ENCODE measurements at regions of chr20 and their contacts with region 1.

Region 1: DNA sequence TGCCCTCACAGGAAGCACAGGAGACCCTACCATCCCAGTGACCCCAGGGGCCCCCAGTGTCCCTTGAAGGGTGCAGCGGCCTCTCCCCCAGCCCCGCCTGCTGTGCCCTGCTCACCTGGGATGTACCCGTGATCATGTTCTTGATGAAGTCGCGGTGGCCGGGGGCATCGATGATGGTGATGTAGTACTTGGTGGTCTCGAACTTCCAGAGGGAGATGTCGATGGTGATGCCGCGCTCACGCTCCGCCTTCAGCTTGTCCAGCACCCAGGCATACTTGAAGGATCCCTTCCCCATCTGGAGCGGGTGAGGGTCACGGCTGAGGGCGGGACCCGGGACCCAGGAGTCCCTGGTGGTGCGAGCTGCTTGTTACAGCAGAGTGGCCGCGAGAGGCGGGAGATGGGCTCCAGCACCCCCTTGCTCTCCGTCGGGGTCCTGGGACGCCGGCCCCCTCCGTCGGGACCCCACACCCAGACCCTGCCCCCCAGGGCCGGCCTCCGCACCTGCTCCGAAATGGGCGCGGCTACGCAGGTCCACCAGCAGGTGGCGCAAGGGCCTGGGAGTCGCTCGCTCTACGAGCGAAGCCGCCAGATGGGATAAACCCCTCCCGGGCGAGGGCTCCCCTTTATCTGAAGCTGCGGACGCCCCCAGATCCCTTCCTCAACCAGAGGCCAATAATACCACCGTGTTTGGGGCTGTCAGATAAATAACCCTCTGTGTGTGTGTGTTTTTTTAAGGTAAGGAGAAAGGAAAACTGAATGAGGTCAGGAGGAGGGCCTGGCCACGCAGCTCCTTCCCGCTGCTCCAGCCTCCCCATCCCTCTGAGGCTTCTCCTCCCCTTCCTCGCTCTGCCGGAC is 2.9 kb downstream of the EEF1A2 start:
- DNase-seq: peak; percentile 87
- ATAC-seq: peak; percentile 61
- H3K4me3 Mint-ChIP-seq: peak overlapping the region; percentile 52
- H3K27ac Mint-ChIP-seq: no peak overlapping the region
- H3K4me1 Mint-ChIP-seq: peaks cover 7% of the 10 kb centered on the region
- H3K27me3 Mint-ChIP-seq: peaks cover 38% of the 10 kb centered on the region
- CTCF ChIP-seq: peak; percentile 97

Region 2: DNA sequence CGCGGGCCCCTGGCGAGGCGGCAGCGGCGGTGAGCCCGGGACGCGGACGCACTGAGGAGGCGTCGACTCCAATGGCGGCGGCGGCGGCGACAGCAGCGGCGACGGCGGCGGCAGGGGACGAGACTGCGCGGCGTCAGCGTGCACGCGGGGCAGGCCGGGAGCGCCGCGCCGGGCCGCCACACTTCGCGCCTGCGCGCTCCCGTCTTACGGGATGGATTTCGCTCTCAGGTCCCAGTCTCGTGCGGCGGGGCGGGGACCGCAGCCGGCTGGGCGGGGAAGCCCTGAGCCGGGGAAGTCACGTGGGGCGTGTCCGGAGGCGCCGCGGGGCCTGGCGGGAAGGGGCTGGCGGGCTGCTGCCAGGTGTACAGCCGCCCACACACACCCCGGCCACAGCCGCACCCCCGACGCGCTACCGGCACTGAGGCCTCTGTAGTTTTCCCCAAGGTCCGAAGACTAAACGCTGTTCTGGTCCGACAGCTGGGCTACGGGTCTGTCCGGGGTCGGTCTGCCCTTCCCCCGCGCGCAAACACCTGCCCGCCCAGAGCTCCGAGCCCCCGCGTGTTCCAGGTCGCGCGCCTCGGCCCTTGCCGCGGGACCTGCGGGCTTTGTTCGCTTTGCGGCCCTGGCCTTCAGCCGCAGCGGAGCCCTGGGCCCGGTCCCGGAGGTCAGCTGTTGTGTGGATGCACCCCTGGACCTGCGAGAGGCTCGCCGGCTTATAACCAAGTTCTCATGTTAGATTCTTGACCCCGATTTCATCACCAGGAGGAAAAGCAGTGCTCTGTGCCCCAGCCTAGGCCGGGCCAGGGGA is 279.7 kb before region 1 on chr20 and contains the start of gene YTHDF1:
- CTCF ChIA-PET with region 1: no interaction called
- POLR2A ChIA-PET with region 1: no interaction called
- DNase-seq: peak; percentile 93
- ATAC-seq: peak; percentile 85
- H3K4me3 Mint-ChIP-seq: peak within 1 kb of the TSS; percentile 96
- H3K27ac Mint-ChIP-seq: peak within 1 kb of the TSS; percentile 93
- H3K4me1 Mint-ChIP-seq: peaks cover 28% of the 10 kb centered on the region
- H3K27me3 Mint-ChIP-seq: peaks cover 4% of the 10 kb centered on the region; the same call in 1 of the 2 replicates
- CTCF ChIP-seq: no peak
- total RNA-seq, gene YTHDF1: 50.2 to 61.3 TPM (median 51.3 TPM) in 3 replicates

Region 3: GRCh38 chr20:63261060-63261794 is 234.7 kb before region 1 on chr20:
- CTCF ChIA-PET with region 1: no interaction called
- POLR2A ChIA-PET with region 1: no interaction called
- DNase-seq: no peak
- ATAC-seq: no peak; the same call in 1 of the 2 replicates
- H3K4me3 Mint-ChIP-seq: no peak overlapping the region
- H3K27ac Mint-ChIP-seq: no peak overlapping the region
- H3K4me1 Mint-ChIP-seq: peaks cover 10% of the 10 kb centered on the region
- H3K27me3 Mint-ChIP-seq: peaks cover 10% of the 10 kb centered on the region
- CTCF ChIP-seq: no peak

Region 4: GRCh38 chr20:63463400-63464288 is 32.3 kb before region 1 on chr20:
- CTCF ChIA-PET with region 1: interaction called, 15 read pairs
- POLR2A ChIA-PET with region 1: no interaction called
- DNase-seq: no peak
- ATAC-seq: no peak
- H3K4me3 Mint-ChIP-seq: no peak overlapping the region
- H3K27ac Mint-ChIP-seq: peak overlapping the region; percentile 4; the same call in 1 of the 2 replicates
- H3K4me1 Mint-ChIP-seq: peaks cover 29% of the 10 kb centered on the region
- H3K27me3 Mint-ChIP-seq: no peaks in the 10 kb centered on the region
- CTCF ChIP-seq: no peak

Region 5: DNA sequence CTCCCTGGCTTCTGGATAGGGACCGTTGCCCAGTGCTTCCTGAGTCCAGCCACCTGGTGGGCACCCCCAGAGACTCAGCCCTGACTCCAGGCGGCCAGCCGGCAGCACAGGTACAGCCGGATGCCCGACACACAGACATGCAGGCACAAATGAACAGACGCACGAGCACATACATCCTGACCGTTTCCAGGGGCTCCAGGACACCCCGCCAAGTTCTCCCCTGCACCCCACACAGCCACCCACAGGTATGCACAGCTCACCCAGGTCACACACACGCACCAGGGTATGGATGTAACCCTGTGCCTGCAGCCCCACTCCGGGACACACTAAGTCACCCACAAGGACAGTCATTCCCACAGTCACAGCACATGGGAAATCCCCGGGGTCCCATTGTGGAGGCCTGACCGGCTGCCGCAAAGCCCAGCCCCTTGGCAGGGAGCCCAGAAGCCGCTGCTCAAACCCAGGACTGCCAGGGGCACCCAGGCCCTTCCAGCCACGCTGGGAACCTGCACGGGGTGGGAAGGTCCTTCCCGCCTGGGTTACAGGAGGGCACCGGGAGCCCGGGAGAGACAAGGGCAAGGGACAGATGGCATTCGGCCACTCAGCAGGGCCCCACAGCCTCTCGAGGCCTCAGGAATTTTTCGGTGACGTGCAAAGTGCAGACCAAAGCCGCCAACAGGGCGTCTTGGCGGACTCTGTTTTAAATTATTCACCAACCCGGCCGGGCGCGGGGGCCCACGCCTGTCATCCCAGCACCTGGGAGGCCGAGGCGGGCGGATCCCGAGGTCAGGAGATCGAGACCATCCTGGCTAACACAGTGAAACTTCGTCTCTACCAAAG is 12.9 kb before region 1 on chr20:
- CTCF ChIA-PET with region 1: interaction called, 32 read pairs
- POLR2A ChIA-PET with region 1: no interaction called
- DNase-seq: no peak
- ATAC-seq: no peak
- H3K4me3 Mint-ChIP-seq: no peak overlapping the region
- H3K27ac Mint-ChIP-seq: no peak overlapping the region
- H3K4me1 Mint-ChIP-seq: peaks cover 20% of the 10 kb centered on the region
- H3K27me3 Mint-ChIP-seq: peaks cover 5% of the 10 kb centered on the region; the same call in 1 of the 2 replicates
- CTCF ChIP-seq: no peak

Region 6: GRCh38 chr20:63529861-63530788 is 34.2 kb after region 1 on chr20:
- CTCF ChIA-PET with region 1: interaction called, 19 read pairs
- POLR2A ChIA-PET with region 1: interaction called, 3 read pairs
- DNase-seq: peak; percentile 14
- ATAC-seq: no peak
- H3K4me3 Mint-ChIP-seq: no peak overlapping the region
- H3K27ac Mint-ChIP-seq: no peak overlapping the region
- H3K4me1 Mint-ChIP-seq: no peaks in the 10 kb centered on the region
- H3K27me3 Mint-ChIP-seq: no peaks in the 10 kb centered on the region
- CTCF ChIP-seq: no peak

Region 7: DNA sequence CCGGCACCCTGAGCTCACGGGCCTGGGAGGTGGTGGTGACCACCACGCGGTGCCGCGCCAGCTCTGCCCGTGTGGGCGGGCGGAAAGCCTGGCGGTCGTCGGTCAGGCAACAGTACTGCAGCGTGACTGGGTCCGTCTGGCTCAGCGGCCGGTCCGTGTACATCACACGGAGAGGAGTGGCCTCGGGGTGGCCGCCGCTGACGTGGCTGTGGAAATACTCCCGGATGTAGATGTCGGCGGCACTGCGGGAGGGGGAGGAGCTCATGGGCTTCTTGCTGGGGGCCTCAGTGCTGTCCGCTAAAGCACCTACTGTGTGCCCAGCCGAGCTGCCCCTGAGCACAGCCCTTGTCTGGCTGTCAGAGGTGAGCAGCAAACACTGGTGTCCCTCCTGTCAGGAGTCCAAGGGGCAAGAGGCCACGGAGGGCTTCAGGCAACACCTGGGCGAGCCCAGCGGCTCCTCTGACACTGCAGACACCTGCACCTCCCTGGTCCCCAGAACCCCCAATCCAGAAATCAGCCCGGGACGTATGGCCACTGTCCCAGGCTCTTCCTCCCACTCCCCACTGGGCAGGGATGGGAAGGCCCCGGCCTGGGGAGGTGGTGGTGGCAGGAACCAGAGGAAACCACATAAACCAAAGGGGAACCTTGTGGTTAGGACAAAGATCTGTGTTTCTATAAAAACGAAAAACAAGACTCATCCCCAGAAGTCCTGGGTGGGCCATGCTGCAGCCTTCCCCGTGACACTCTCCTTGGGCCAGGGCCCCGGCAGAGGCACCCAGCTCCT is 71.6 kb after region 1 on chr20:
- CTCF ChIA-PET with region 1: no interaction called
- POLR2A ChIA-PET with region 1: no interaction called
- DNase-seq: no peak
- ATAC-seq: no peak
- H3K4me3 Mint-ChIP-seq: no peak overlapping the region
- H3K27ac Mint-ChIP-seq: no peak overlapping the region
- H3K4me1 Mint-ChIP-seq: no peaks in the 10 kb centered on the region
- H3K27me3 Mint-ChIP-seq: no peaks in the 10 kb centered on the region
- CTCF ChIP-seq: no peak

Region 8: GRCh38 chr20:63641792-63642544 is 146.0 kb after region 1 on chr20:
- CTCF ChIA-PET with region 1: interaction called, 12 read pairs
- POLR2A ChIA-PET with region 1: no interaction called
- DNase-seq: peak; percentile 97
- ATAC-seq: peak; percentile 77
- H3K4me3 Mint-ChIP-seq: peak overlapping the region; percentile 72
- H3K27ac Mint-ChIP-seq: no peak overlapping the region
- H3K4me1 Mint-ChIP-seq: peaks cover 9% of the 10 kb centered on the region
- H3K27me3 Mint-ChIP-seq: no peaks in the 10 kb centered on the region
- CTCF ChIP-seq: no peak